MCF 10A (cell line): ENCODE measurements at regions of chr2 and their contacts with region 1.

Region 1: GRCh38 chr2:134460583-134460998 is 206.7 kb downstream of the MGAT5 start:
- DNase-seq: peak; percentile 63
- H3K4me3 Mint-ChIP-seq: no peak overlapping the region
- H3K27ac Mint-ChIP-seq: no peak overlapping the region
- H3K4me1 Mint-ChIP-seq: peaks cover 8% of the 10 kb centered on the region
- H3K27me3 Mint-ChIP-seq: no peaks in the 10 kb centered on the region
- CTCF ChIP-seq: peak; percentile 79

Region 2: DNA sequence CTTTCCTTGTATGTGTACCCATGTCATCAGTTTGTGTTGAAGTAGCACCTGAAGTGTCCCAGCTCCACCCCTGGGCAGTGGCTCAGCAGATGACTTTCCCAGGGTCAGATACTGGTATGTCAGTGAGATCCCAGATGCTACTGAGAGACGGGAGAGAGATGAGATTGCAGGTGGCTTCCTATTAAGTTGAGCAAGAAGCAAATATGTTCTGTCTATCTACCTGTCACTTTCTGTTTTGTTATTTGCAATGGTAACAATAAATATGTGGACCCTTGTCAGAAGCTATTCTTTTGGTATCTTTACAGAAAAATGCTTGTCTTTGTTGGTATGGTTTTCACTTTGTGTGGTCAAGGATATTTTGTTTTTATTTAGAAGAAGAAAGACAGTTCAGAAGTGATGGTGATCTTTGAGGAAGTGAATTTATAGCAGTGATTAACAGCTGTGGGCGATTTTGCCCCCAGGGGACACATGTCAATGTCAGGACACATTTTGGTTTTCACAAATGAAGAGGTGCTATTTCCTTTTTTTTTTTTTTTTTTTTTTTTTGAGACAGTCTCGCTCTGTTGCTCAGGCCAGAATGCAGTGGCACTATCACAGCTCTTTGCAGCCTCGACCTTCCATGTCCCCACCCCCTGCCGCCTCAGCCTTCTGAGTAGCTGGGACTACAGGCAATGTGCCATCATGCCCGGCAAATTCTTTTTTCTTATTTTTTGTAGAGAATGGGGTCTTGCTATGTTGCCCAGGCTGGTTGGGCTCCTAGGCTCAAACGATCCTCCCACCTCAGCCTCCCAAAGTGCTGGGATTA is 185.3 kb before region 1 on chr2:
- CTCF ChIA-PET with region 1: no interaction called
- POLR2A ChIA-PET with region 1: no interaction called
- intact Hi-C with region 1: no loop called
- DNase-seq: no peak
- H3K4me3 Mint-ChIP-seq: no peak overlapping the region
- H3K27ac Mint-ChIP-seq: no peak overlapping the region
- H3K4me1 Mint-ChIP-seq: peaks cover 10% of the 10 kb centered on the region
- H3K27me3 Mint-ChIP-seq: no peaks in the 10 kb centered on the region
- CTCF ChIP-seq: no peak

Region 3: GRCh38 chr2:134581877-134582546 is 121.4 kb after region 1 on chr2:
- CTCF ChIA-PET with region 1: no interaction called
- POLR2A ChIA-PET with region 1: no interaction called
- intact Hi-C with region 1: no loop called
- DNase-seq: no peak
- H3K4me3 Mint-ChIP-seq: no peak overlapping the region
- H3K27ac Mint-ChIP-seq: no peak overlapping the region
- H3K4me1 Mint-ChIP-seq: no peaks in the 10 kb centered on the region
- H3K27me3 Mint-ChIP-seq: no peaks in the 10 kb centered on the region
- CTCF ChIP-seq: no peak

Region 4: DNA sequence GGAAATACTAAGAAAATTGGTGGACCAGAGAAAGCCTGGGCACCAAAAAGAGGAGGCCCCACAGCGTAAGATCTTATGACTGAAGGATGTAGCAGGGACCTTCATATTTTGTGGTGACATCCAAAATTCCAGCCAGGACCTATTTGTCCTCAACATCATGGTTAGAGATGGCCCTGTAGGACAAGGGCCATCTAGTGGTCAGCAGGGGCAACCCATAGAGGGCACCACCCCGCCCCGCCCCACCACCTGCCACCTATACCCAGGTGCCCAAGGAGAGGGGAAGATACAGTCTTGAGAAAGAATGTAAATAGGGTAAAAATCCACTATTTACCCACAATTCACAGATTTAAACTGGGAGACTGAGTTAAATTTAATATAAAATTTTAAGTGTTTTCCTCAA is 317.8 kb after region 1 on chr2:
- CTCF ChIA-PET with region 1: interaction called, 3 read pairs
- POLR2A ChIA-PET with region 1: no interaction called
- intact Hi-C with region 1: loop called (anchors 10 kb)
- DNase-seq: peak; percentile 15
- H3K4me3 Mint-ChIP-seq: no peak overlapping the region
- H3K27ac Mint-ChIP-seq: no peak overlapping the region
- H3K4me1 Mint-ChIP-seq: peaks cover 15% of the 10 kb centered on the region
- H3K27me3 Mint-ChIP-seq: no peaks in the 10 kb centered on the region
- CTCF ChIP-seq: no peak

Region 5: DNA sequence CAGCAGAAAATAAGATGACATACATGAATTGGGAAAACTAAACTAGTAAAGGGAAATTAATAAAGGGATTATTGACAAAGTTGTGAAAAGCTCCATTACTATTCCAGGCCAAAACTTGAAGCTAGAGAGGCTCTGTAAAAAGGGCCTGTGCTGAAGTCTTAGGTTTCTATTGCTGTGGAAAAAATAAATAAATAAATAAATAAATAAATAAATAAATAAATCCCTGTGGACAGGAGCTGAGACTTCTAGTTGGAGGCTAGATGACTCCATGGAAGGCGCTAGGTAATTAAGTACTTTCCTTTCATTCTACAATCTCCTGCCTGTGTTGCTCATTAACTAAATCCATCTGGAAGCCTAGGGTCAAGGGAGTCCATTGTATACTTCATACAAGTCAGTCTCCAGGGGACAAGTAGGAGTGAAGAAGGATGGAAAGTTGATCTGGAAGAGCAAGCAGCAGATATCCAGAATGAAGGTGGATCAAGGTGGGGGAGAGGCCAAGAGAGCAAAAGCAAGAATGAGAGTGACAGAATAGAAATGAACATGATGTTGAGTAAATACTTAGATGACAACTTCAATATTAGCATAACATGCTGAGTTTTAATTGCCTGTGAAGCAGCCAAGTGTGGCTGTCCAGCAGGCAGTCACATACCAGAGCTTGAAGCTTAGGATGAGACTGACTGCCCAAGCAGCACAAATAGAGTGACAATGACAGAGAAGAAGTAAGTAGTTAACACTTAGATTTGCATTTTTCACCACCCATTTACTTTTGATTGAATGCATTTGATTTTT is 431.9 kb after region 1 on chr2:
- CTCF ChIA-PET with region 1: interaction called, 41 read pairs
- POLR2A ChIA-PET with region 1: no interaction called
- intact Hi-C with region 1: no loop called
- DNase-seq: no peak
- H3K4me3 Mint-ChIP-seq: no peak overlapping the region
- H3K27ac Mint-ChIP-seq: no peak overlapping the region
- H3K4me1 Mint-ChIP-seq: no peaks in the 10 kb centered on the region
- H3K27me3 Mint-ChIP-seq: no peaks in the 10 kb centered on the region
- CTCF ChIP-seq: no peak